Activated CD4-positive, alpha-beta T cell treated with anti-CD3 and anti-CD28 coated beads, Interleukin-2, amount 10 ng/mL, durations not matched to agents 24 days and 14 days (primary cell): ENCODE measurements at regions of chr11 and their contacts with region 1.

Region 1: GRCh38 chr11:75721855-75722668 is 4.4 kb downstream of the MOGAT2 start:
- DNase-seq: no peak
- H3K4me3 Mint-ChIP-seq: no peak overlapping the region
- H3K27ac Mint-ChIP-seq: no peak overlapping the region
- H3K4me1 Mint-ChIP-seq: peaks cover 2% of the 10 kb centered on the region
- H3K27me3 Mint-ChIP-seq: peaks cover 3% of the 10 kb centered on the region

Region 2: GRCh38 chr11:75768112-75768908 is 46.2 kb after region 1 on chr11 and contains the start of gene DGAT2:
- intact Hi-C with region 1: loop called (anchors 5 kb)
- DNase-seq: peak; percentile 92
- H3K4me3 Mint-ChIP-seq: peak within 1 kb of the TSS; percentile 84
- H3K27ac Mint-ChIP-seq: peak within 1 kb of the TSS; percentile 83
- H3K4me1 Mint-ChIP-seq: peaks cover 36% of the 10 kb centered on the region
- H3K27me3 Mint-ChIP-seq: peaks cover 26% of the 10 kb centered on the region
- total RNA-seq, gene DGAT2: 7.3 and 8.6 TPM in 2 replicates

Region 3: DNA sequence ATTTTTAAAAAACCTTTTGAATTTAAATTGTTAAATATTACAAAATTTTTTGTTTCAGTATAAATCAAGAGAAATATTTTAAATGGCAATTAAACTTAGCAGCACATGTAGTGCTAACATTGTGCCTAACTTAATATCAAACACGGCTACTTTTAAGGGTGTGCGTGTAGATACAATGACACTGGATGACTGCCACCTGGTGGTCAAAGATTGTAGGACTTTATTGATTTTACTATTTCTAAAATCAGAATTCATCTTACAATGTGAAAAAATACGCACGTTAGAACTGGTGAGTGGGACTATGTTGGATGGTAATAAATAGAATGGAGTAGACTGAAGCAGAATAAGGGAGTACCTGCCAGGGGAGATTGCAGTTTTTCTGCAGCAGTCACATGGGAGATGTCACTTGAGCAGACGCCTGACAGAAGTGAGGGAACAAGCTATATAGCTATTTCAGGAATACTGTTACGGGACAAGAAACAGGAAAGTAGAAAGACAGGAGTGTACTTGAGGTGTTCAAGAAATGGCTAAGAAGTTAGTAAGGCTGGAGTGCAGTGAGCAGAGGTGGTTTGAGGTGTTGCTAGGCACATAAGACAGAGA is 145.8 kb after region 1 on chr11:
- intact Hi-C with region 1: loop called (anchors 1 kb)
- DNase-seq: peak; percentile 84
- H3K4me3 Mint-ChIP-seq: no peak overlapping the region
- H3K27ac Mint-ChIP-seq: no peak overlapping the region
- H3K4me1 Mint-ChIP-seq: peaks cover 5% of the 10 kb centered on the region
- H3K27me3 Mint-ChIP-seq: no peaks in the 10 kb centered on the region

Region 4: GRCh38 chr11:76152086-76152681 is 430.1 kb after region 1 on chr11:
- intact Hi-C with region 1: loop called (anchors 10 kb)
- DNase-seq: peak; percentile 95
- H3K4me3 Mint-ChIP-seq: peak overlapping the region; percentile 77
- H3K27ac Mint-ChIP-seq: no peak overlapping the region
- H3K4me1 Mint-ChIP-seq: peaks cover 17% of the 10 kb centered on the region
- H3K27me3 Mint-ChIP-seq: peaks cover 28% of the 10 kb centered on the region

Region 5: DNA sequence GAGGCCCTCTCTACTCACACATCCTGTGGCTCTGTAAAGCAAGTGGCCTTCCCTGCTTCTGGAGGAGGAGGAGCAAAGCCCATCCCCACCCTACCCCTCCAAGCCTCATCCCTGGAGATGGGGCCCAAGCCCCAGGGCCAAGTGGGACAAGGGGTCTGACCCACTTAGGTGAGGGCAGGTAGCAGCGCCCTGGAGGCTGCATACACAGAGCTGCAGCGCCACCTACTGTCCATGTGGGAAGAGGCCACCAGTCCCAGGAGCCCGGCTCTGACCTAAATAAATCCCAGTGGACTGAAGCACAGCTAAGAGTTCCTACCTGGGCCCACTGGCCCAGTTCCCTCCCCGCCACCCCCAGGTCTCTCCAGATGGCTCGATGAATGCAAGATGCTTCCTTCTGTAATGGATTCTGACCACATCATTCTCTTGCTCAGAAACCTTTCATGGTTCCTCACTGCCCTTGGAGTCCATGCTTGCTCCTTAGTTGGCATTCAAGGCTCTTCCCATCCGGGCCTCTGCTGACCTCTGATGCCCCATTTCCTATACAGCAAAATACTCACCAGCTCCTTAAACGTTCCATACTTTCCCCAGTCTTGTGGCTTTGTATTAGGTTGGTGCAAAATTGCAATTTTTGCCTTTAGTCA is 596.8 kb after region 1 on chr11:
- intact Hi-C with region 1: loop called (anchors 2 kb)
- DNase-seq: peak; percentile 94
- H3K4me3 Mint-ChIP-seq: no peak overlapping the region
- H3K27ac Mint-ChIP-seq: no peak overlapping the region
- H3K4me1 Mint-ChIP-seq: peaks cover 14% of the 10 kb centered on the region
- H3K27me3 Mint-ChIP-seq: peaks cover 42% of the 10 kb centered on the region